Gastrocnemius medialis (tissue), 4 donors: ENCODE measurements at regions of chr19 and their contacts with region 1.

Region 1: DNA sequence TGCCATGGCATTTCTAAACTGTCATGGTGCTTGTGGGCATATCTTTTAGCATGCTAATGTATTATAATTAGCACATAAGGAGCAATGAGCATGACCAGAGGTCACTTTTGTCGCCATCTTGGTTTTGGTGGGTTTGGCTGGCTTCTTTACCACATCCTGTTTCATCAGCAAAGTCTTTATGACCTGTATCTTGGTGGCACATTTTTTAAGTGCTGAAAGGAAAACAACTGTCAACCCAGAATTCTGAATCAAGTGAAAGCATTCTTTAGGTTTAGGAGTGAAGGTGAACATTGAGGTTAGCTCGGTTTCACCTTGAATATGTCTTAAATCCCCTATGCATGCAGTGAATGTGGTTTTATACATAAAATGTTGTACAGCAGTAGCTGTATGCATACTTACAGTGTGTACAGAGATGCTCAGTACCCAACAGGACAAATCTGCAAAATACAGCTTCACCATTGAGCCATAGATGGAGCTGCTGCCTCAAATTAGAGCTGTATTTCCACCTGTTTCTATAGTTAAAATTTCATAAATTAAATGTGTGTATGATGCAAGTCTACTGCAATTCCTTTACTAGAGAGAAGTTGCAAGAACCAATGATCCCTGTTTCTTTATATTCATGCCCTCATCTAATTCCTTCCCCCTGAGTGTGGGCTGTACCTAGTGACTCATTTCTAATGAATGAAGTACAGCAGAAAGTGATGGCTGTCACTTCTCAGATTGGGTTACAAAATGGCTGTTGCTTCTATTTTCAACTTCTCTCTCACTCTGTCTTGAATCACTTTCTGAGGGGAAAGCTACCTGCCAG is 25.2 kb upstream of the IGSF23 start:
- DNase-seq: peak; percentile 14 to 25
- ATAC-seq: peak; percentile 98 to 99
- H3K4me3 ChIP-seq: no peak overlapping the region
- H3K27ac ChIP-seq: peak overlapping the region; percentile 55 to 79 (median 72)
- H3K4me1 ChIP-seq: peaks cover 8 to 16% of the 10 kb centered on the region in 2 donors
- H3K27me3 ChIP-seq: no peaks in the 10 kb centered on the region
- CTCF ChIP-seq: no peak
- POLR2A ChIP-seq: no peak

Region 2: DNA sequence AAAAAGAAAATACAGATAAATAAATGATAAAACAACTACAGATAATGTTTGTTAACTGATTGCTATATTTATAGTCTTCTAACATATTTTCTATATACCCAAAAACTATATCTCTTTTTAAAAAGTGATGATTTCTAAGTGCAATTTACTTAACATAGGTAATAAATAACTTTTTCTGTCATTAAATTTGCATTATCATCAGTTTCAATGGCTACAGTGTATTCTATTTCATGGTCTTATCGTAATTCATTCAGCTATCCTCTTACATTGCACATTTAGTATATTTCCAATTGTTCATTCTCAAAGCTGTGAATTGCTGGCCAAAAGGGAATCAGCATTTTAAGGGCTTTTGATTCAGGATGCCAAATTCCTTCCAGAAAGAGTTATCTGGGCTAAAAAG is 91.5 kb before region 1 on chr19:
- in situ Hi-C with region 1: no loop called
- intact Hi-C with region 1: no loop called
- DNase-seq: no peak
- ATAC-seq: no peak
- H3K4me3 ChIP-seq: peak overlapping the region in 1 of 4 donors; percentile 11
- H3K27ac ChIP-seq: no peak overlapping the region
- H3K4me1 ChIP-seq: peaks cover 12 to 17% of the 10 kb centered on the region in 2 donors
- H3K27me3 ChIP-seq: no peaks in the 10 kb centered on the region
- CTCF ChIP-seq: no peak
- POLR2A ChIP-seq: no peak

Region 3: DNA sequence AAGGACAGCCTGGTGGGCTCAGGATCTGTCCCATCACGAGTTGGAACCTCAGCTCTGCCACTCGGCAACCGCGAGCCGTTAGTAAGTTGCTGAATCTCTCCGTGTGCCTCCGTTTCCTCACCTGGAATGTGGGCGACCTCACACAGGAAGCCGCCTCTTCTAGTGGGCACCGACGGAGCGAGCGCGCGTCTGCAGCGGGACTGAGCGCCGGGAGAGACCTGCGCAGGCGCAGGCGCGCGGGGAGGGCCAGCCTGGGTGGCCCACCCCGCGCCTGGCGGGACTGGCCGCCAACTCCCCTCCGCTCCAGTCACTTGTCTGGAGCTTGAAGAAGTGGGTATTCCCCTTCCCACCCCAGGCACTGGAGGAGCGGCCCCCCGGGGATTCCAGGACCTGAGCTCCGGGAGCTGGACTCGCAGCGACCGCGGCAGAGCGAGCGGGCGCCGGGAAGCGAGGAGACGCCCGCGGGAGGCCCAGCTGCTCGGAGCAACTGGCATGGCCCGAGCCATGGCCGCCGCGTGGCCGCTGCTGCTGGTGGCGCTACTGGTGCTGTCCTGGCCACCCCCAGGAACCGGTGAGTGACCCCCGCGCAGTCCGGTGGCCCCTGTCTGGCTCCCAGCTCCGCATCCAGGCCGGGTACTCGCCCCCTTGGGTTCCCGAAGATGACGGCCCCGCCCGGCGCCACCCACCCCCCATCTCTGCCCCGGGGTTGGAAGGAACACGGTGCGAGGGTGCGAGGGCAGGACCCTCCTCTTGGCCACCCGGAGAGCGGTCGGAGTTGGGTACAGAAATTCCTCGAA is 55.6 kb after region 1 on chr19 and contains the start of gene PVR:
- in situ Hi-C with region 1: no loop called
- intact Hi-C with region 1: loop called (anchors 5 kb)
- DNase-seq: peak; percentile 45 to 72
- ATAC-seq: peak; percentile 72 to 76
- H3K4me3 ChIP-seq: peak within 1 kb of the TSS; percentile 75 to 98 (median 92)
- H3K27ac ChIP-seq: peak within 1 kb of the TSS; percentile 88 to 97 (median 95)
- H3K4me1 ChIP-seq: peaks cover 41 to 42% of the 10 kb centered on the region in 2 donors
- H3K27me3 ChIP-seq: no peaks in the 10 kb centered on the region
- CTCF ChIP-seq: peak in 1 of 5 experiments; percentile 13
- POLR2A ChIP-seq: peak; percentile 84 to 86
- total RNA-seq, gene PVR: 27.3 to 60.2 (median 33.9) TPM

Region 4: GRCh38 chr19:44657211-44657921 is 69.2 kb after region 1 on chr19:
- in situ Hi-C with region 1: no loop called
- intact Hi-C with region 1: loop called (anchors 5 kb)
- DNase-seq: peak in 1 of 2 donors; percentile 36
- ATAC-seq: peak; percentile 60 to 65
- H3K4me3 ChIP-seq: no peak overlapping the region
- H3K27ac ChIP-seq: no peak overlapping the region
- H3K4me1 ChIP-seq: no peaks in the 10 kb centered on the region
- H3K27me3 ChIP-seq: no peaks in the 10 kb centered on the region
- CTCF ChIP-seq: peak; percentile 82 to 95 (median 91)
- POLR2A ChIP-seq: no peak